ENCODE measurements at regions of chr9 and their contacts with region 1.

Region 1: DNA sequence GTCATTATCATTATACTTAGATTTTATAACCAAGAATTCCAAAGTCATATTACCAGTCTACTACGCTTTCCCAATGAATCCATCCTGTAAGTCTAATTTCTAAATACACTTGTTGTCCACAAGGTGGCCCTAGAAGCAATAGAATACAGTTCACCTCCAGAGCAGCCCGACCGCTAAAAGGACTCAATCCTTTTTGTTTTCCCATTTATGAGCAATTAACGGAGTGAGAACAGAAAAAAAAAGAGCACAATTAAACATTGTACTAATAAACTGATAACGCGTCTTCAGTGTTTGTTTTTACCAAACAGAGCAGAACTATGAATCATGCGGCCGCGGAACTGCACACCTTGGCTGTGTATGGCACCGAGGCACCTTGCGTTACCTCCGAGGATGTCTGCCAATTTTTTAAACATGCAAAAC is 160.7 kb upstream of the DAPK1 start:
- DNase-seq: peak; percentile 94
- H3K4me3 ChIP-seq: peak overlapping the region; percentile 49
- H3K27ac ChIP-seq: peak overlapping the region; percentile 77
- H3K4me1 ChIP-seq: peaks cover 45% of the 10 kb centered on the region
- H3K27me3 ChIP-seq: no peaks in the 10 kb centered on the region
- CTCF ChIP-seq: peak; percentile 66

Region 2: GRCh38 chr9:86413966-86414880 is 922.7 kb before region 1 on chr9:
- CTCF ChIA-PET with region 1: no interaction called
- POLR2A ChIA-PET with region 1: no interaction called
- intact Hi-C with region 1: loop called (anchors 5 kb)
- DNase-seq: peak; percentile 74
- H3K4me3 ChIP-seq: no peak overlapping the region
- H3K27ac ChIP-seq: no peak overlapping the region
- H3K4me1 ChIP-seq: no peaks in the 10 kb centered on the region
- H3K27me3 ChIP-seq: no peaks in the 10 kb centered on the region
- CTCF ChIP-seq: peak; percentile 81

Region 3: DNA sequence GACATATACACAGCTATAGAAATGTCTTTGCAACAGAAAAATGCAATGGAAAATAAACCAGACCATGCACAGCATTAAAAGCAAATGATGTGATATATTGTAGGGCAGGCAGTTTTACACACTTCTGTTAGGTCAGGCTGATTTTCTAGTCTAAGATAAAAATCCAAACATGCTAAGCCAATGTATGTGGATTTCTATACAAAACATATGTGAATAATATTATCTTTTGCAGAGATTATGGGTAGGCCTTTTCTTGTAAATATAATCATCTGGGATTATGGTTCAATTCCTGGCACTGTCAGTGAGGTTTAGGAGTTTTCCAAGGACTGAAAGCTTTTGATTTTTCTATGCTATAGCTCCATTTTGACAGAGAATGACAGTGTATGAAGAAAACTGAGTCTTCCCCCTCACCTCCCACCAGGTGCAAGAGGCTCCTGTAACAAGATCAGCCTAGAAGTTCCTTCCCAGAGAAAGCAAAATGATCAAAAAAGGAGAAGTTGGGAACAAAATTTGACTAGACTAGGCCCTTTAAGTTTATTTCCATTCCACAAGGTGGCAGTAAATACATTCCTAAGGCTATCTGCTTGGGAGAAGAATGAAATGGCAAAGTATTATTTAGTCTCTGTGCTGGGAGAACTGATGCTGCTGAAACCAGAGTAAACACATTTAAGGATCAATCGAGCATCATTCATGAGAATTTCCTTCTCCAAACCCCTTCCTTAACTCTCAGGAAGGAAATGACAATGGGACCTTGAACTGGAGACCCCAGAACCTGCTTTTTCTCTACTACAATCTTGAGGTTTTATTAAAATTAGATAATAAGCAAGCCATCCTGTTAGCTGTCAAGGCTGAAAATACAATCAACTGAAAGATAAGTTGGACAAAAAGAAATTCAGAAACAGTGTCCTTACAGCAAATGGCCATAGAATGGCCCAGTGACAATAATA is 849.8 kb before region 1 on chr9:
- CTCF ChIA-PET with region 1: no interaction called
- POLR2A ChIA-PET with region 1: no interaction called
- intact Hi-C with region 1: loop called (anchors 5 kb)
- DNase-seq: peak; percentile 90
- H3K4me3 ChIP-seq: no peak overlapping the region
- H3K27ac ChIP-seq: peak overlapping the region; percentile 72
- H3K4me1 ChIP-seq: peaks cover 38% of the 10 kb centered on the region
- H3K27me3 ChIP-seq: no peaks in the 10 kb centered on the region
- CTCF ChIP-seq: peak; percentile 74

Region 4: DNA sequence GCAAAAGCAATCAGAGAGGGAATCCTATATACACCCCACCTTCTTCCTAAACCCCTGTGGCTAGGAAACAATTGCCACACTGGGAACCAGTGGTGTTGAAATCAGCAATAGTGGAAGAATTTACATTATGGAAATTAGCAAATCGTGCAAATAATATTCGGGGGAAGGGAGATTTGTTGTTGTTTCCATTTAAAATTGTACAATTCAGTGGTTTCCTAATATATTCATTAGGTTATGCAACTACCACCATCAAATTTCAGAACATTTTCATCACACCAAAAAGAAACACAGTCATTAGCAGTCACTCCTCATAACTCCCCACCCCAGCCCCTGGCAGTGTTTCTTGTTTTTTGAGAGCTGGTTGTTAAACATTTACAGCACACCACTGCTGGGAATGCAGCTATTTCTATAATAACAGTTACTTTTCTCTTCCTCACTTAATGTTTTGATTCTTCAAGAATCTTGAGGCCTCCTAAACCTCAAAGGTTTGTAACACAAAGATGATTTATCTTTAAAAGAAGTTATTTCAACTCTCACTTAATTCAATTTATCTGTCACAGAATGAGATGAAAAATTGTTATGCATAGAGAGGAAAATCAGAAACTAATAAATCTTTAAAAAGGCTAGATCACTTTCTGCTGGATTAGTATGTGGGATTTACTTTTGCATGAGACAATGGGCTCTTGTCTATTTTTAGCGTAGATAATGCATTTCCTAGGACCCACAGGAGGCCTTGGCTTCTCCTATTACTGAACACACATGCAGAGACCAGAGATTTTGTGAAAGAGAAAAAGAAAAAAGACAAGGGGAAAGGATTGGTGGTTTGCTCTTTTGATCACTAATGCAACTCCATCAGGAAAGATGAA is 69.0 kb after region 1 on chr9:
- CTCF ChIA-PET with region 1: no interaction called
- POLR2A ChIA-PET with region 1: interaction called, 3 read pairs
- intact Hi-C with region 1: loop called (anchors 2 kb)
- DNase-seq: peak; percentile 90
- H3K4me3 ChIP-seq: no peak overlapping the region
- H3K27ac ChIP-seq: peak overlapping the region; percentile 93
- H3K4me1 ChIP-seq: peaks cover 52% of the 10 kb centered on the region
- H3K27me3 ChIP-seq: no peaks in the 10 kb centered on the region
- CTCF ChIP-seq: no peak

Region 5: DNA sequence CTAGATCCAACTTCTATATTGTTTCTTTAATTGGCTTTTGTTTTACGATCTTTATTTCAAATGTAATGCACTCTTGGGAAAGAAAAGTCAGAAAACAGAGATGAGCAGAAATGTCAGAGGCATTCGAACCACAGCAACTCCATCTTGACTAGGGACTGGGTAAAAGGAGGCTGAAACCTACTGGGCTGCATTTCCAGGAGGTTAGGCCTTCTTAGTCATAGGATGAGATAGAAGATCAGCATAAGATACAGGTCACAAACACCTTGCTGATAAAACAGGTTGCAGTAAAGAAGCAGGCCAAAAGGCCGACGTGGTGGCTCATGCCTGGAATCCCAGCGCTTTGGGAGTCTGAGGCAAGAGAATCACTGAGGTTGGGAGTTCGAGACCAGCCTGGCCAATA is 130.3 kb after region 1 on chr9:
- CTCF ChIA-PET with region 1: no interaction called
- POLR2A ChIA-PET with region 1: no interaction called
- intact Hi-C with region 1: no loop called
- DNase-seq: no peak
- H3K4me3 ChIP-seq: no peak overlapping the region
- H3K27ac ChIP-seq: no peak overlapping the region
- H3K4me1 ChIP-seq: peaks cover 23% of the 10 kb centered on the region
- H3K27me3 ChIP-seq: no peaks in the 10 kb centered on the region
- CTCF ChIP-seq: no peak

Region 6: GRCh38 chr9:87479801-87480201 is 142.9 kb after region 1 on chr9:
- CTCF ChIA-PET with region 1: no interaction called
- POLR2A ChIA-PET with region 1: no interaction called
- intact Hi-C with region 1: loop called (anchors 1 kb)
- DNase-seq: no peak
- H3K4me3 ChIP-seq: no peak overlapping the region
- H3K27ac ChIP-seq: peak overlapping the region; percentile 68
- H3K4me1 ChIP-seq: peaks cover 51% of the 10 kb centered on the region
- H3K27me3 ChIP-seq: no peaks in the 10 kb centered on the region
- CTCF ChIP-seq: no peak

Region 7: GRCh38 chr9:87497604-87498045 is 160.7 kb after region 1 on chr9 and contains the start of gene DAPK1:
- CTCF ChIA-PET with region 1: interaction called, 6 read pairs
- POLR2A ChIA-PET with region 1: no interaction called
- intact Hi-C with region 1: loop called (anchors 5 kb)
- DNase-seq: peak; percentile 90
- H3K4me3 ChIP-seq: peak within 1 kb of the TSS; percentile 91
- H3K27ac ChIP-seq: peak within 1 kb of the TSS; percentile 99
- H3K4me1 ChIP-seq: peaks cover 62% of the 10 kb centered on the region
- H3K27me3 ChIP-seq: no peaks in the 10 kb centered on the region
- CTCF ChIP-seq: peak; percentile 37; the same call in 1 of the 2 replicates
- total RNA-seq, gene DAPK1: 380 and 386 TPM in 2 replicates

Region 8: GRCh38 chr9:87662808-87663528 is 326.0 kb after region 1 on chr9:
- CTCF ChIA-PET with region 1: interaction called, 3 read pairs
- POLR2A ChIA-PET with region 1: no interaction called
- intact Hi-C with region 1: loop called (anchors 2 kb)
- DNase-seq: peak; percentile 81
- H3K4me3 ChIP-seq: no peak overlapping the region
- H3K27ac ChIP-seq: peak overlapping the region; percentile 48
- H3K4me1 ChIP-seq: peaks cover 18% of the 10 kb centered on the region
- H3K27me3 ChIP-seq: no peaks in the 10 kb centered on the region
- CTCF ChIP-seq: peak; percentile 81

Region 9: DNA sequence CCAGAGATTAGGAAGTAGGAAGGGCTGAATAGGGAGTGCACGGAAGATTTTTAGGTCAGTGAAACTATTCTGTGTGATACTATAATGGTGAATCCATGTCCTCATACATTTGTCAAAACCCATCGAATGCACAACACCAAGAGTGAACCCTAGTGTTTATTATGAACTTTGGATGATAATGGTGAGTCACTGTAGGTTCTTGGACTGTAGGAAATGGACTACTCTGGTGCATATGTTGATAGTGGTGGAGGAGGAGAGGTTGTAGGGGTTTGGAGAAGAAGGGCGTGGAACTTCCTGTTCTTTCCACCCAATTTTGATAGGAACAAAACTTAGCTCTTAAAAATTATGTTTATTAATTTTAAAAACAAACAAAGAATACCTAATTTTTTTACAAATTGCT is 403.3 kb after region 1 on chr9:
- CTCF ChIA-PET with region 1: no interaction called
- POLR2A ChIA-PET with region 1: no interaction called
- intact Hi-C with region 1: no loop called
- DNase-seq: no peak
- H3K4me3 ChIP-seq: no peak overlapping the region
- H3K27ac ChIP-seq: no peak overlapping the region
- H3K4me1 ChIP-seq: peaks cover 14% of the 10 kb centered on the region
- H3K27me3 ChIP-seq: no peaks in the 10 kb centered on the region
- CTCF ChIP-seq: no peak

Measured in A673 (cell line).